Tibial artery (tissue), 4 donors: ENCODE measurements at regions of chr15 and their contacts with region 1.

Region 1: GRCh38 chr15:40893733-40894688 is at the start of gene VPS18:
- DNase-seq: peak; percentile 98 to 99
- H3K4me3 ChIP-seq: peak within 1 kb of the TSS; percentile 74 to 80
- H3K27ac ChIP-seq: peak within 1 kb of the TSS; percentile 87 to 92
- H3K4me1 ChIP-seq: peaks cover 0 to 30% (median 18%) of the 10 kb centered on the region in 4 donors
- H3K27me3 ChIP-seq: no peaks in the 10 kb centered on the region
- CTCF ChIP-seq: peak; percentile 97 to 99

Region 2: DNA sequence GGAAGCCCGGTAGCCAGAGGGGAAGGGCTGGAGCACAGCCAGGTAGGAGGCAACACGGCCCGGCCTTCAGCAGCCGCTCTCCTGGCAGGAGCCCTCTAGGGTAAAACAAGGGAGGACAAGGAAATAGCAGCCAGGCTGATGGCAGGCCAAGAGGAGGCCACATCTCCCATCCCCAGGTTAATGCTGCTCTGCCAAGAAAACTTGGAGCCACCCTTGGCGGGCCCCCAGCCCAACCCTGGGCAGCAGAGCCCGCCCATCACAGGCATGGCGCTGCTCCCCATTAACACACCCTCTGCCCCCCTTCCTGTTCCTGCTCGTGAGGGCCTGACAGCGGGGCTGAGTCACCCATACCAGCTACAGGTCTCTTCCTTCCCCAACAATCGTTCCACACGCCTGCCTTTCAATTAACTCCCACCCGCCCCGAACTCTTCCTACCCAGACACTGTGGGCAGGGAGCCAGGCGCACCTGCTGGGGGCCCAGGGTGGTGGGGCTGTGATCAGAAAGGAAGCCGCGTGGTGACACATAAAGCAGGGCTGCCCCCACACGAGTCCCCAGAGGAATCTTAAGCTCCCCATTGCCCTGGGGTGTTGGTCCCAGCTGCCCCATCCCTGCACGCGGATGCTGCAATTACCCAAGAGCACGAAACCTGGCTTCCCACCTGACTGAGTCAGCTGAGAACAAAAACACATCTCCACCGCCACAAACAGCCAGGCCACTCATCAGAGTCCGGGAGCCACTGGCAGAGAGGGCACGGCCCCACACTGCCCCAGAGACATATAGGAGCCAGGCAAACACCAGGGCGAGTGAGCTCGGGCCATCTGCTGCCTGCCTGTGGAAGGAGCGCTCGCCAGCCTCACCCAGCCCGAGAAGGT is 124.5 kb before region 1 on chr15 and contains the start of gene C15orf62:
- intact Hi-C with region 1: loop called (anchors 5 kb)
- DNase-seq: peak in 1 of 2 donors; percentile 66
- H3K4me3 ChIP-seq: no peak within 1 kb of the TSS
- H3K27ac ChIP-seq: no peak within 1 kb of the TSS
- H3K4me1 ChIP-seq: peaks cover 0 to 55% (median 18%) of the 10 kb centered on the region in 4 donors
- H3K27me3 ChIP-seq: no peaks in the 10 kb centered on the region
- CTCF ChIP-seq: no peak

Region 3: GRCh38 chr15:40847205-40847961 is 46.6 kb before region 1 on chr15:
- intact Hi-C with region 1: no loop called
- DNase-seq: peak; percentile 61 to 75
- H3K4me3 ChIP-seq: no peak overlapping the region
- H3K27ac ChIP-seq: no peak overlapping the region
- H3K4me1 ChIP-seq: peaks cover 0 to 24% (median 14%) of the 10 kb centered on the region in 4 donors
- H3K27me3 ChIP-seq: peaks cover 0 to 37% of the 10 kb centered on the region in 2 donors
- CTCF ChIP-seq: no peak

Region 4: GRCh38 chr15:40857601-40858341 is 36.2 kb before region 1 on chr15:
- intact Hi-C with region 1: loop called (anchors 1 kb)
- DNase-seq: peak; percentile 43 to 76
- H3K4me3 ChIP-seq: no peak overlapping the region
- H3K27ac ChIP-seq: no peak overlapping the region
- H3K4me1 ChIP-seq: peaks cover 0 to 10% (median 2%) of the 10 kb centered on the region in 4 donors
- H3K27me3 ChIP-seq: peaks cover 0 to 22% of the 10 kb centered on the region in 2 donors
- CTCF ChIP-seq: peak; percentile 91 to 97

Region 5: GRCh38 chr15:40928821-40929659 is 35.0 kb after region 1 on chr15 and contains the start of gene DLL4:
- intact Hi-C with region 1: no loop called
- DNase-seq: peak in 1 of 2 donors; percentile 55
- H3K4me3 ChIP-seq: peak within 1 kb of the TSS; percentile 50 to 66
- H3K27ac ChIP-seq: no peak within 1 kb of the TSS
- H3K4me1 ChIP-seq: peaks cover 0 to 58% (median 54%) of the 10 kb centered on the region in 4 donors
- H3K27me3 ChIP-seq: peaks cover 0 to 73% of the 10 kb centered on the region in 2 donors
- CTCF ChIP-seq: no peak